GM10248 (cell line): ENCODE measurements at regions of chr6 and their contacts with region 1.

Region 1: DNA sequence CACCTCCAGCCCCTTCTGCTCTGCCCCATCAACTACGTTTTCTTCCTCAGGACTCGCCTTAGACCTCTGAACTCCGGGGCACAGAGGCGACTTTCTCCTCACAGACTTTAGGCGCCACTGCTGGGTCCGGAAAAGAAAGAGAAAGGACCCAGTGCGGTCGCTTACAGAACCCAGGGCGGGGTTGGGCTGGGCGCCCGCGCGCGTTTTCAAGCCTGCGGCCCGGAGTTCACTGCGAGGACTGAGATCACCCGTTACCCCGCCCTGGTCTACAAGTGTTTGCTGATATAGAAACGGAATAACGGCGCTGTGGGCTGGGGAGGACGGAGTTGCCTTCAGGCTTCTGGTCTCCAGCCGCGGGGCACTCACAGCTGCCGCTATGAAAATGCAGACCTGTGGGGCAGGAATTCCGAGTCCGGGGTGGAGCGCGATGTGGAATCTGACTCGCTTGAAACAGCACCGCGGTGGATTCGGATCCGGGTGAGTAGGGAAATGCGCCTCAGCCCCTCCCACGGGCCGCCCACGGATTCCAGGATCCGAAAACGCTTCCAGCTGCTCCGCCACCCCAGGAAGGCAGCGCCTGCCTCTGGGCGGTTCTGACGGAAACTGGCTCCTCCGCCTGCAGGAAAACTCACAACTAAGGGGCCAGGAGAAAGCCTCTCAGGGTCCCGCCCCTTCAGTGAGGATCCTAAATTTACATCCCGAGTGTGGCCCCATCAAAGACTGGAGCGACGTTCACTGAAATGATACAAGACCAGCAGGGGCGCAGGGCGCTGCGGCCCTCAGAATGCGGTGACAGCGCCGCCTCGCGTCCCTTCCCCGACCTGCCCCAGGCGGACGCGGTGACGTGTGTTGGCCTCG is 29.4 kb downstream of the HLA-F start:
- DNase-seq: peak; percentile 87
- CTCF ChIP-seq: peak; percentile 97

Region 2: DNA sequence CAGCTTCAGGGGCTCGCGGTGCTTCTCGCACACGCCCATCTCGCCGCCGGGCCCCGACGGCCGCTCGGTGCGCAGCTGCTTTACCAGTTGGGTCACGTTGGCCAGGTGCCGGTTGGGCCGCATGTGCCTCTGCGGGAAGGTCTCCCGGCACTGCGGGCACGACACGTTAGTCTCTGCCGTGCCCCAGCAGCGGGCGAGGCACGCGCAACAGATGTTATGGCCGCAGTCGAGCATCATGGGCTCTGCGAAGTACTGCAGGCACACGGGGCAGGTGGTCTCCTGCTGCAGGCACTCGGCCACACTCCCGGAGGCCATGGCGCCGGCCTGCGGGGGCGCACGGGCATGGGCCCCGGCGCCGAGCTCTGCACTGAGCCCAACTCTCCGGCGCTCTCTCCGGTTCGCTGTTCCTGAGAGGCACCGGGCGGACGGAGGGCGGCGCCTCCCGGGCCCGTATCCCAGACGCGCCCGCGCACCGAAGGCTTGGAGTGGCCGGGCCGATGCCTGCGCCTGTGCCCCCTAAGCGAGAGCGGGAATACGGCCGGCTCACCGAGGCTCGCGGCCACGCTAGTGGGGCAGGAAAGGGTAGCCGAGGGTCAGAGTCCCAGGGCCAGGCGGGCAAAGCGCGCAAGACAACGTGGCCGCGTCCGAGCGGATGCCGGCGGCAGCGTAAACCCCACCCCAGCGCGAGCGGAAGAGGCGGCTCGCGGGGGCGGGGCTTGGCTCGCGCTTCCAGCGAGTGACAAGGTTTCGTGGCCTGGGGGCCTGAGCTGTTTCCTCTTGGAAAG is 829.2 kb before region 1 on chr6 and contains the start of gene TRIM27:
- CTCF ChIA-PET with region 1: no interaction called
- POLR2A ChIA-PET with region 1: no interaction called
- DNase-seq: peak; percentile 90
- CTCF ChIP-seq: no peak

Region 3: GRCh38 chr6:29547573-29547972 is 205.1 kb before region 1 on chr6:
- CTCF ChIA-PET with region 1: no interaction called
- POLR2A ChIA-PET with region 1: no interaction called
- DNase-seq: no peak
- CTCF ChIP-seq: no peak

Region 4: DNA sequence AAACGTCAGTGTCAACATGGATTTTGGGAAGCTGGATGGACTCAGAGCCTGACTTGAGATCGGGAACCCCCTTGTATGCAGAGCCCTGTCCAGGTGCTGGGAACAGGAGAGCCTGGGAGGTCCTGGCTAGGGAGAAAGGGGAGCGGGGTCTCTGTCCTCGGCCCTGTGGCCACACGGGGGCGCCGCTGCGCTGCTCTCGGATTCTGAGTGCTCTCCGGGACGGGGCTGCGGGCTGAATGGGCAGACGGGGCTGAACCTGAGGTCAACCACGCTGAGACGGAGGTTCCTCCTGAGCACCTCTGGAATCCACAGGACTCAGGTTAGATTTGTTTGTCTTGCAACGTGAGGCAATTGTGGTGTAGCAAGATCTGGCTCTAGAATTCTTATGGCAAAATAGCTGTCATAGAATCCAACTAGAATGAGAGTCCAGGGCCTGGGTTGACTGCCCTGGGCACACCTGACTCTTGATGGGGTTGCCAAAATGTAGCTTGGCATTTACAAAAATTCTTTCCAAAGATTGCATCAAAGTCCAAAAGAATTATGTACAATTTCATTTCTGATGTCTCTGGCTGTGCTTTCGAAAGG is 50.1 kb before region 1 on chr6:
- CTCF ChIA-PET with region 1: interaction called, 11 read pairs
- POLR2A ChIA-PET with region 1: no interaction called
- DNase-seq: peak; percentile 66
- CTCF ChIP-seq: peak; percentile 70

Region 5: DNA sequence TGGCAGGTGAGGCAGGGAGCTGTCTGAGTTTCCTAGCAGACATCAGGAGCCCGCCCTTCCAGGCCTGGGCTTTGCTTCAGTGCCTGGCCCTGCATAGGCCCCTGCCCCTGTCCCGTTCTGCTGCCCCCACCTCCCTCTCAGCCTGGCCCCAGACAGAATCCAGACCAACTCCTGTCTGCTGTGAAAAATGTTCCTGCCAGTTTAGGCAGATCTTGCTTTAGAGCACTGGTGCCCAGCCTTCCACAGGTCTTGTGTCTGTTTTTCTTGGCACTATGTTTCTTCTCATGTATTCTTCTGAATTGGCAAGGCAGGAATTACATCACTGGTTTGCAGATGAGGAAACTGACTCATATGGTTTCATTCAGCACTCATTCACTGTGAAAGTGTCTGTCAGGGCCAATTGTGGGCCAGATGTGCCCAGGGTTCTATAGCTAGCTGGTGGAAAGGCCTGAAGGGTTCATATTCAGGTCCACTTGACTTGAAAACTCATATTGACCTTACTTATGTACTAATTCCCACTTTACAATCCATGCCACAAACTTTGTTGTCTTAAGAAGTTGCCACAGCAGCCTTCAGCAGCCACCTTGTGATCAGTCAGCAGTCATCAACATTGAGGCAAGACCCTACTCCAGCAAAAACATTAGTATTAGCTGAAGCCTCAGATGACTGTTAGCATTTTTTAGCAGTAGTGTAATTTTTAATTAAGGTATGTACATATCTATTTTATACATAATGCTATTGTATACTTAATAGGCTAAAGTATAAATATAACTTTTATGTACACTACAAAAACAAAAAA is 11.0 kb after region 1 on chr6:
- CTCF ChIA-PET with region 1: interaction called, 22 read pairs
- POLR2A ChIA-PET with region 1: no interaction called
- DNase-seq: peak; percentile 24
- CTCF ChIP-seq: no peak

Region 6: DNA sequence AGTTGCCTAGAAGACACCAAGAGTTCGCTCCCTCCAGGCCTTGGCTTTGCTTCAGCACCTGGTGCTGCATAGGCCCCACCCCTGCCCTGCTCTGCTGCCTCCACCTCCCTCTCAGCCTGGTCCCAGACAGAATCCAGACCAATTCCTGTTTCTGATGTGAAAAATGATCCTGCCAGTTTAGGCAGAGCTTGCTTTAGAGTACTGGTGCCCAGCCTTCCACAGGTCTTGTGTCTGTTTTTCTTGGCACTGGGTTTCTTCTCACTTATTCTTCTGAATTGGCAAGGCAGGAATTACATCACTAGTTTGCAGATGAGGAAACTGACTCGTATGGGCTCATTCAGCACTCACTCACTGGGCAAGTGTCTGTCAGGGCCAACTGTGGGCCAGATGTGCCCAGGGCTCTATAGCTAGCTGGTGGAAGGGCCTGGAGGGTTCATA is 242.7 kb after region 1 on chr6:
- CTCF ChIA-PET with region 1: no interaction called
- POLR2A ChIA-PET with region 1: no interaction called
- DNase-seq: no peak
- CTCF ChIP-seq: no peak